Left ventricle myocardium inferior (tissue), 1 donor: ENCODE measurements at regions of chr15 and their contacts with region 1.

Region 1: DNA sequence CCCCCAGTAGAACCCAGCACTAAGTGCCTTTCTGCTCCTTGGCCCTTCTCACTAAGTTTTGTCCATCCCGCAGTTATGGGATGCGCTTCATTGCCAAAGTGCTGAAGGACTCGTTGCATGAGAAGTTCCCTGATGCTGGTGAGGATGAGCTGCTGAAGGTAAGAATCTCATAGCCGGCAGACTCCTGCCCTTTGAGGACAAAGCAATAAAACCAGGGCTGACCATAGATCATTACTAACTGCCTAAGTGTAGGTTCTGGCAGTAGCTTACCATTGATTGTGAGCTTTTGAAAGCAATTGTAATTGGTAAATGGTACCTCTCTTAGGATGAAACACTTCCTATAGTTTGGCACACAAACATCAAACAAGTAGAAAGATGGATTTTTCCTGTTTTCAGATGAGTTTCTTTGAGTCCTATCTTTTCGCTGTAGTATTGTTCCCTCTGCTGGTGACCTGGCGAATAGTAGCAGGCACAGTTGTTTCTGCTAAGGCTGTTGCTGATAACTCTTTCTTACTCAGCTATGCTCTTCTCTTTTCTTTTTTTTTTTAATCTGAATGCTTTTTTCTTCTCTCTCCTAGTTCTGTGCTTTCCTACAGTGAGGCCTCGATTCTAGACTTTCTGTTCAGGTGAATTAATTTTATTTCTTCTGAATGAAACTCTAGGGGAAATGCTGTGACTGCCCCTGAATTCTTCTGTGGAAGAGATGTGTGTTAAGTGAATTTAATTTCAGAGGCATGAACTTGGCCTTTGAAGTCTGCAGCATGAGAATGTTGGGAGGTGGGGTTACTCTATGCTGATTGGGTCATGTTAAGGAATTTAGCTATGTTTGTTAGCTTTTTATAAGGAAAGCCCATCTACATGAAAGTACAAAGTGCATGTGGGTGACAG is 47.4 kb upstream of the CRTC3 start:
- DNase-seq: no peak
- H3K4me3 ChIP-seq: no peak overlapping the region
- H3K27ac ChIP-seq: peak overlapping the region; percentile 24
- H3K4me1 ChIP-seq: no peaks in the 10 kb centered on the region
- H3K27me3 ChIP-seq: no peaks in the 10 kb centered on the region
- CTCF ChIP-seq: peak; percentile 77

Region 2: GRCh38 chr15:90320061-90320884 is 162.1 kb before region 1 on chr15:
- intact Hi-C with region 1: loop called (anchors 5 kb)
- DNase-seq: peak; percentile 73
- H3K4me3 ChIP-seq: peak overlapping the region; percentile 26
- H3K27ac ChIP-seq: peak overlapping the region; percentile 25
- H3K4me1 ChIP-seq: peaks cover 18% of the 10 kb centered on the region
- H3K27me3 ChIP-seq: no peaks in the 10 kb centered on the region
- CTCF ChIP-seq: peak; percentile 100

Region 3: GRCh38 chr15:90362936-90363212 is 119.5 kb before region 1 on chr15:
- intact Hi-C with region 1: loop called (anchors 5 kb)
- DNase-seq: no peak
- H3K4me3 ChIP-seq: no peak overlapping the region
- H3K27ac ChIP-seq: peak overlapping the region; percentile 83
- H3K4me1 ChIP-seq: peaks cover 16% of the 10 kb centered on the region
- H3K27me3 ChIP-seq: no peaks in the 10 kb centered on the region
- CTCF ChIP-seq: no peak

Region 4: GRCh38 chr15:90412356-90413194 is 69.8 kb before region 1 on chr15:
- intact Hi-C with region 1: no loop called
- DNase-seq: no peak
- H3K4me3 ChIP-seq: no peak overlapping the region
- H3K27ac ChIP-seq: peak overlapping the region; percentile 54
- H3K4me1 ChIP-seq: peaks cover 71% of the 10 kb centered on the region
- H3K27me3 ChIP-seq: no peaks in the 10 kb centered on the region
- CTCF ChIP-seq: no peak

Region 5: GRCh38 chr15:90539789-90540188 is 57.4 kb after region 1 on chr15:
- intact Hi-C with region 1: no loop called
- DNase-seq: no peak
- H3K4me3 ChIP-seq: no peak overlapping the region
- H3K27ac ChIP-seq: peak overlapping the region; percentile 36
- H3K4me1 ChIP-seq: peaks cover 68% of the 10 kb centered on the region
- H3K27me3 ChIP-seq: no peaks in the 10 kb centered on the region
- CTCF ChIP-seq: no peak